ENCODE measurements at regions of chr14 and their contacts with region 1.

Region 1: DNA sequence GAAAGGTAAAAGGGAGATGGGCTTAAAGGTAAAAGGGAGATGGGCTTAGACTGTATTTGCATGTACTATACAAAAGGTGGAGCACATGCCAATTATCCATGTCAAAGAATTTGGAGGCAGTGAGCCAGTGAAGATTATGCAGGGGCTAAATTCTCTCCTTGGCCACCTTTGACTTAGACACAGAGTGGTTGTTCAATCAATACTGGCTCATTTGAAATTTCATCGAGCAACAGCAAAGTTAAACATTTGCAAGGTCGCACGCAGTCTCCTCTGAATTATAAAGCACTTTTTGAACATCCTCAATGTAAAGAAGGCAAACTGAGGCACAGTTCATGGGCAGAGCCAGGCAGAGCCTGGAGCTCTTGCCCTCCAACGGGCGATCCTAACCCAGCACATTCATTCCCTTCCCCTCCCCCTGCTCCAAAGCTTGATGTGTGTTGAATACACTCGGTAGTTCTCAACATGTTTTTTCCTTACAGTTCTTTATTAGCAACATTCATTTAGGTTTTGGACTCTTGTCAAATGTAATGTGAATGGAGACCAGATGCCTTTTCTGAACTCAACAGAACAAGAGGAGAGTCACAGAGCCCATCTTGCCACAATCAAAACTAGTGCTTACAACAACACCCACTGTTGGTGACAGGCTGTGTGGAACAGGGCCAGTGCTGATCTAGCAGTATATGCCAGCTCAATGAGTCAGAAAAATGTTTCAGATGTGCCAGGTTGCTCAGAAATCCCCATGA is 169.7 kb upstream of the G2E3 start:
- DNase-seq: peak in 1 of 2 donors; percentile 22
- H3K4me3 ChIP-seq: no peak overlapping the region
- H3K27ac ChIP-seq: peak overlapping the region in 1 of 2 donors; percentile 51
- H3K4me1 ChIP-seq: no peaks in the 10 kb centered on the region
- H3K27me3 ChIP-seq: no peaks in the 10 kb centered on the region
- CTCF ChIP-seq: no peak
- POLR2A ChIP-seq: no peak

Region 2: GRCh38 chr14:30375296-30375892 is 13.9 kb before region 1 on chr14:
- intact Hi-C with region 1: loop called (anchors 2 kb)
- DNase-seq: peak in 1 of 2 donors; percentile 58
- H3K4me3 ChIP-seq: no peak overlapping the region
- H3K27ac ChIP-seq: no peak overlapping the region
- H3K4me1 ChIP-seq: no peaks in the 10 kb centered on the region
- H3K27me3 ChIP-seq: no peaks in the 10 kb centered on the region
- CTCF ChIP-seq: peak; percentile 24 to 64 (median 43)
- POLR2A ChIP-seq: no peak

Region 3: DNA sequence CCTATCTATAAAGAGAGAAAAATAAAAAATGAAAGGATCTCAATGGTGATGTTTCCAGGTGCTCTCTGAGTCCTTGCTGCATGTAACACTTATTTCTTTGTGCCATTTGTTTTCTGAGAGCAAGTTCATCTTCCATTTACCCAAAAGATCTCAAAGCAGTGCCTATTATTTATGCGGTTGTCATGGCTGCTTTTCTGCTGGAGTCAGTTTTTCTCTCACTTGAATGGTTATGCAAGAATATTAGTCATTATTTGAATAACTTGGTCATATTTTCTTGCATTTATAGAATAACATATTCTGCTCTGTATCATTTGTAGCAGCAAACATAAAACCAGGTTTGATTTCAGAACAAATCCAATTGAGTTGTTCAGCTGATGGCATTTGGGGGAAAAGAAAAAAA is 27.8 kb after region 1 on chr14:
- intact Hi-C with region 1: no loop called
- DNase-seq: no peak
- H3K4me3 ChIP-seq: no peak overlapping the region
- H3K27ac ChIP-seq: no peak overlapping the region
- H3K4me1 ChIP-seq: no peaks in the 10 kb centered on the region
- H3K27me3 ChIP-seq: no peaks in the 10 kb centered on the region
- CTCF ChIP-seq: no peak
- POLR2A ChIP-seq: no peak

Measured in breast epithelium (tissue), 4 donors.